Left colon (tissue), 2 donors: ENCODE measurements at regions of chrX and their contacts with region 1.

Region 1: GRCh38 chrX:3651276-3651675 is 62.2 kb downstream of the PRKX start:
- DNase-seq: peak in 1 of 2 donors; percentile 18
- ATAC-seq: peak; percentile 49

Region 2: DNA sequence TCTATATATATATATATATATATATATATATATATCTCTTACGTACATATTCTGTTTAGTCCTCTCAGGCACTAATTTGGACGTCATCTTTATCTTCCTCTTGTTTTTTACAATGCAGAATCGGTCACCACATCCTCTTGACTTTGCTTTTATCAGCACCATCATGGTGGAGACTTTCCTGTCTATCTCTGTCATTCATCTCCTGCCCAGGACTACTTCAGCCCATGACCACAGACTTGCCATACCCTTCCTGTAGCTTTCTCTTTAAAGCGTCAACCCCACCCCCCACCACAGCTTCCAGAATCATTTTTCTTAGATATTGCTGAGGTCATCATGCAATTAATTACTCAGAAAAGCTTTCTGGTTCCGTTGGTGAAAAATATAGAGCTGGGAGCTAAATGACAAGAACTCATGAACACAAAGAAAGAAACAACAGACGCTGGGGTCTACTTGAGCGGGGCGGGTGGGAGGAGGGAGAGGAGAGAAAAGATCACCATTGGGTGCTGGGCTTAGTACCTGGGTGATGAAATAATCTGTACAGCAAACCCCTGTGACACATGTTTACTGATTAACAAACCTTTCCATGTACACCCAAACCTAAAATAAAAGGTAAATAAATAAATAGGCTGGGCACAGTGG is 92.6 kb after region 1 on chrX:
- intact Hi-C with region 1: no loop called
- DNase-seq: peak in 1 of 2 donors; percentile 12
- ATAC-seq: no peak

Region 3: GRCh38 chrX:3811331-3812311 is 160.3 kb after region 1 on chrX:
- intact Hi-C with region 1: loop called in 1 of 2 experiments (anchors 5 kb)
- DNase-seq: peak; percentile 33 to 38
- ATAC-seq: no peak